AG04450 (cell line): ENCODE measurements at regions of chr22 and their contacts with region 1.

Region 1: DNA sequence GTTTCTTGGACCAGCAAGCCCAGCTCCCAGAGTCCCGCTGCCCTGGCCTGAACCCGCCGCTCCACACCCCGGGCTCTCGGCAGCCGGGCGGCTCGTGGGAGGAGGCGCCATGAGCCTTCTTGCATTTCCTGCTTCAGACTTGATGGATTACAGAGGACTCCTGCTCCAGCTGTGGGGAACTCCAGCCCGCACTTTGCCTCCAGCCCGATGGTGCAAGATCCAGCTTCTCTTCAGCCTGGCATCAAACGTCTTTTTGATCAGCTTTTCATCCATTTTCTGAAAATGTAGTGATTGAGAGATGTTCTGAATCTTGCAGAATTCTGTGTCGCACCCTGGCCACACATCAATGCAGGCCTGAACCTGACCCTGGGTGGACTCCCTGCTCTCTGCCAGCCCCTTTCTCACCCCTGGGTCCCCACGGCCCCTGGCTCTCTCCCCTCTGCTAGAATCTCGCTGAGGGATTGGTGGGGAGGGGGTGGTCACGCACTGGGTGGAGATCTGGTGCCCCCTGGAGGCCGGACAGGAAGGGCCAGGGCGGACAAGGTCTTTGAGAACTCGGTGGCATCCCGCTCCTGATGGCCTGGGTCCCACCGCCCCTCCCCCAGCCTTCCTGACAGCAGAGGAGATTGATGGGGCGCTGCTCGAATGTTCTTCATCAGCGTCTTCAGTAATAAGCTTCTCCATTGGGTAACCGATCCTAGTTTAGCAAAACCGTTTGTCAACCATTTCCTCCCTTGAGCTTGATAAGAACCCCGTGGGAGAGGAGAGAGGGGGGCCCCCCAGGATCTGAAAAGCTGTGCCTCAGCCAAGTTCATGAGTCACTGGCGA is 12.1 kb upstream of the NFAM1 start:
- DNase-seq: peak; percentile 74
- H3K4me3 ChIP-seq: peak overlapping the region; percentile 53
- H3K27ac ChIP-seq: peak overlapping the region; percentile 57
- H3K27me3 ChIP-seq: peaks cover 5% of the 10 kb centered on the region
- CTCF ChIP-seq: peak; percentile 82

Region 2: GRCh38 chr22:41966607-41967240 is 477.6 kb before region 1 on chr22:
- CTCF ChIA-PET with region 1: interaction called, 35 read pairs
- POLR2A ChIA-PET with region 1: no interaction called
- DNase-seq: peak; percentile 61
- H3K4me3 ChIP-seq: no peak overlapping the region
- H3K27ac ChIP-seq: no peak overlapping the region
- H3K27me3 ChIP-seq: peaks cover 11% of the 10 kb centered on the region
- CTCF ChIP-seq: peak; percentile 43

Region 3: DNA sequence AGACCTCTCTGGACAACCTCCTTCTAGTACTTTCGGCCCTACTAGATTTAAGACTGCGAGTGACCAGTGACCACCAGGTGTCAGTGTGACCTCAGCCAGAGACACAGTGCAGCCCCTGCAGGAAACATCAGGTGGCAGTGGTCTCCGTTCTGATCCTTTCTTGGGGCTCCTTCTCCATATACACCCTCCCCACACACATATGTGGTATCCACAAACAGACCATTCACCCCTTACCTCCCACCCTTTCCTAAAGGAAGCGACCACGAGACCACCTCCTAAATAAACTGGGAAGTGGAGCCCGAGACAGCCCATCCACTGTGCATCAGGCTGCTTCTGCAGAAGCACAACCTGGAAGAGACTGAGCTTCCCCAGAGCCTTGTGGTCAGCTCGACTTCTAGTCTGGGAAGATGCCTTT is 275.2 kb before region 1 on chr22:
- CTCF ChIA-PET with region 1: interaction called, 40 read pairs
- POLR2A ChIA-PET with region 1: interaction called, 3 read pairs
- DNase-seq: peak; percentile 37
- H3K4me3 ChIP-seq: no peak overlapping the region
- H3K27ac ChIP-seq: no peak overlapping the region
- H3K27me3 ChIP-seq: no peaks in the 10 kb centered on the region
- CTCF ChIP-seq: peak; percentile 99

Region 4: DNA sequence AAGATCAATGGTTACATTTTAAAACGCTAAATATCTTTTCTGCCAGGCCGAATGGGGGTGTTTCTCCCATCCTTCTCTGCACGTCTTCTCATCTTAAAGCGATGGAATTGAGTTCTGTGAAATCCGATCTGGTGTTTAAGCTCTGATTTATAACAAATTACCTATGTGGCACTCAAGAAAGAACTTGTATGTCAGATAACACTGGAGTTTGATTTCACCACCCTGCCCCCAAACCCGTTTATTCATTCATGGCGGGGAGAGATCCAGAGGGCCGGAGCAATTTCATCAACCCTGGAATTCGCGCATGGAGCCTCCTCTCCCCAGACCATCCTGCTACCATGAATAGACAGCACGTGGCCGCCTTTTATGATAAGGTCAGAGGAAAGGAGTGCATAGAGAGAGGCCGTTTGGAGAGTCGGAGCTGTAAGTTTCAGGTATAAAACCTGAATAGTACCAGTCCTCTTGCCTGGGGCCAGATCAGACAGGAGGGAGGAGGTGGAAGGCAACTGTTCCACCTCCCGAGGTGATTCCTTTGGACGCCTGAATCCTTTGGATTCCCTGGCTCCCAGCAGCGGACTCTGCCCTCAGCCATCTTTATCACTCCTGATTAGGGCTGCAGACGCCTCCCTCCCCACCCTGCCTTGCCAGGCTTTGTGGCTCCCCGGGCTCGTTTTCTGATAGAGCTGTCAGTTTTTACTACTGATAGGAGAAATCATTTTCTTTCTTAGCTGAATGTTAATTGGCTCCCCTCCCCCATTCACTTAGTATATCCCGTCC is 15.2 kb after region 1 on chr22:
- CTCF ChIA-PET with region 1: interaction called, 14 read pairs
- POLR2A ChIA-PET with region 1: no interaction called
- DNase-seq: no peak
- H3K4me3 ChIP-seq: no peak overlapping the region
- H3K27ac ChIP-seq: no peak overlapping the region
- H3K27me3 ChIP-seq: peaks cover 31% of the 10 kb centered on the region
- CTCF ChIP-seq: no peak

Region 5: DNA sequence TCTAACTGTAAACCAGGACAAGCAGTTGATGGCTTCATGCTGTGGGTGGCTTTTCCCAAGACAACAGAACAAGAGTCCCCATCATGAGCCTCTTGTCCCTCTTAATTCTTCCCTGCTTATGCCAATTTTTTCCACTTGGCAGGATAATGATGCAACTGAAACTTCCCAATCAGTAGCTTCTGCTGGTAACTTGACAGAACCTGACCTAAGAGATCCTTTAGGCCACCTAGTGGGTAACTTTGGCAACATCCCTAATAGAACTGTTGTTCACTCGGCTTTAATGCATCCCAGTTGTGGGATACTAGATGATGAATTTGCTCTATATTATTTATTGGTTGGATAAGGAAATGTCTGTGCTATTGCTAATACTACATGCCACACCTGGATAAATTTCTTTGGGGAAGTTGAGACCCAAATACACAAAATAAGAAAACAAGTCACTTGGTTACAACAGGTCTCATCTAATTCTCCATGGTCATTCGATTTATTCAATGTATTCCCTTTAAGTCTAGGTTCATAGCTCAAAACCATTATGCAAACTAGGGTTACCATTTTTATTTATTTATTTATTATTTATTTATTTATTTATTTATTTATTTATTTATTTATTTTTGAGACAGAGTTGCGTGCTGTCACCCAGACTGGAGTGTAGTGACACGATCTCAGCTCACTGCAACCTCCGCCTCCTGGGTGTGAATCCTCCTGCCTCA is 29.3 kb after region 1 on chr22:
- CTCF ChIA-PET with region 1: interaction called, 10 read pairs
- POLR2A ChIA-PET with region 1: no interaction called
- DNase-seq: peak; percentile 11
- H3K4me3 ChIP-seq: no peak overlapping the region
- H3K27ac ChIP-seq: no peak overlapping the region
- H3K27me3 ChIP-seq: peaks cover 13% of the 10 kb centered on the region
- CTCF ChIP-seq: peak; percentile 78